ENCODE measurements at regions of chrX and their contacts with region 1.

Region 1: DNA sequence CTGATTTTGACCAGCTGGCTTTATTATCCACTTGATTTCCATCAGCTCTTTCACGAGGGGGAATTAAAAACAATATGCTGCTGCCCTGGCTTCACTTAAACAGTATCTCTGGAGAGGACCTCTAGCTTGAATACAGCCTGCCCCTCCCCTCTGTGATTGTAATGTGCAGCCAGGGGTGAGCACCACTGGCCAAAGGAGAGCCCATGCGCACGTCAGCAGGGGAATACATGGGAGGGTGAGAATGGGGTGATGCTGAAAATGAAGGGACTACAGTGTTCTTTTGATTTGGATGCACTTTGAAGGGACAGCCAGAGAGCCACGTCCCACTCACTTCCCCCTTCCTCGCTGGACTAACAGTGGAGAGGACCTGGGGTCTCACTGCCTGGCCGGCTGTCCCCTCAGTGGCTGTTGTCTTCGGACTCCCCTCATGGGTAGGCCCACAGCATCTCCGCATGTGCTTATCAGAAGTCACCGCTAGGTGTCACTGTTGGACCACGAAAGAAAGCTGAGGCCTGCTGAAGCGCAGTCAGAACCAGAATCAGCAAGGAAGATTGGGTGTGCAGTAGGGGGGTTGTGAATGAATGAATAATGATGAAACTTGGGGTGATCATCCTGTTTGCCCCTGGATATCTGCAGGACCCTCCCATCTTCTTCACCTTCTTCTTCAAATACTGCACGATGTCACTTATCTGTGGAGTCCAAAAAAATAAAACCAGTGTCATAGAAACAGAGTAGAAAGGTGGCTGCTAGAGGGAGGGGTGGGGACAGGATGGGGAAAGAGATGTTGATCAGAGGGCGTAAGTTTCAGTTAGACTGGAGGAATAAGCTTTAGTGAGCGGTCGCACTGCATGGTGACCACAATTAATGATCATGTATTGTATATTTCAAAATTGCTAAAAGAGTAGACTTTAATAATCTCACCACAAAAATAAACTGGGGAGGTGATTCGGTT is 32.8 kb downstream of the CLCN4 start:
- DNase-seq: peak; percentile 49
- ATAC-seq: peak; percentile 84
- H3K4me3 Mint-ChIP-seq: no peak overlapping the region
- H3K27ac Mint-ChIP-seq: peak overlapping the region; percentile 50
- H3K4me1 Mint-ChIP-seq: peaks cover 10% of the 10 kb centered on the region
- H3K27me3 Mint-ChIP-seq: no peaks in the 10 kb centered on the region
- CTCF ChIP-seq: no peak

Region 2: DNA sequence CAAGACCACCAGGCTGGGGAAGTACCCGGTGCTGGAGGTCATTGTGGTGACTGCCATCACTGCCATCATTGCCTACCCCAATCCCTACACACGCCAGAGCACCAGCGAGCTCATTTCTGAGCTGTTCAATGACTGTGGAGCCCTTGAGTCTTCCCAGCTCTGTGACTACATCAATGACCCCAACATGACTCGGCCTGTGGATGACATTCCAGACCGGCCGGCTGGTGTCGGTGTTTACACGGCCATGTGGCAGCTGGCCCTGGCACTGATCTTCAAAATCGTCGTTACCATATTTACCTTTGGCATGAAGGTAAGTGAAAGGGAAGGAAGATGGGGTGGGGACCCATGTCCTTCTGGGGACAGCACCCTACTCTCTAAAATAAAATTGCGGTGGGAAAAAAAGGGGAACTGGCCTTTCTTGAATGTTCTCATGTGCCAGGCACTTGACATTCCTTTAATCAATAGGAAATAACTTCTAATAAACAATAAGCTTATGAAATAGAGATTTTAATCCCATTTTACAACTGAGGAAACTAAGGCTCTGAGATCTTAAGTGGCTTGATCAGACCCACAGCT is 18.8 kb after region 1 on chrX:
- CTCF ChIA-PET with region 1: interaction called, 11 read pairs
- POLR2A ChIA-PET with region 1: no interaction called
- intact Hi-C with region 1: no loop called
- DNase-seq: no peak
- ATAC-seq: no peak
- H3K4me3 Mint-ChIP-seq: no peak overlapping the region
- H3K27ac Mint-ChIP-seq: peak overlapping the region; percentile 56
- H3K4me1 Mint-ChIP-seq: peaks cover 18% of the 10 kb centered on the region
- H3K27me3 Mint-ChIP-seq: no peaks in the 10 kb centered on the region
- CTCF ChIP-seq: no peak

Region 3: GRCh38 chrX:10326578-10326977 is 137.0 kb after region 1 on chrX:
- CTCF ChIA-PET with region 1: interaction called, 3 read pairs
- POLR2A ChIA-PET with region 1: no interaction called
- intact Hi-C with region 1: loop called (anchors 1 kb)
- DNase-seq: no peak
- ATAC-seq: no peak
- H3K4me3 Mint-ChIP-seq: no peak overlapping the region
- H3K27ac Mint-ChIP-seq: no peak overlapping the region
- H3K4me1 Mint-ChIP-seq: no peaks in the 10 kb centered on the region
- H3K27me3 Mint-ChIP-seq: peaks cover 4% of the 10 kb centered on the region
- CTCF ChIP-seq: no peak

Region 4: DNA sequence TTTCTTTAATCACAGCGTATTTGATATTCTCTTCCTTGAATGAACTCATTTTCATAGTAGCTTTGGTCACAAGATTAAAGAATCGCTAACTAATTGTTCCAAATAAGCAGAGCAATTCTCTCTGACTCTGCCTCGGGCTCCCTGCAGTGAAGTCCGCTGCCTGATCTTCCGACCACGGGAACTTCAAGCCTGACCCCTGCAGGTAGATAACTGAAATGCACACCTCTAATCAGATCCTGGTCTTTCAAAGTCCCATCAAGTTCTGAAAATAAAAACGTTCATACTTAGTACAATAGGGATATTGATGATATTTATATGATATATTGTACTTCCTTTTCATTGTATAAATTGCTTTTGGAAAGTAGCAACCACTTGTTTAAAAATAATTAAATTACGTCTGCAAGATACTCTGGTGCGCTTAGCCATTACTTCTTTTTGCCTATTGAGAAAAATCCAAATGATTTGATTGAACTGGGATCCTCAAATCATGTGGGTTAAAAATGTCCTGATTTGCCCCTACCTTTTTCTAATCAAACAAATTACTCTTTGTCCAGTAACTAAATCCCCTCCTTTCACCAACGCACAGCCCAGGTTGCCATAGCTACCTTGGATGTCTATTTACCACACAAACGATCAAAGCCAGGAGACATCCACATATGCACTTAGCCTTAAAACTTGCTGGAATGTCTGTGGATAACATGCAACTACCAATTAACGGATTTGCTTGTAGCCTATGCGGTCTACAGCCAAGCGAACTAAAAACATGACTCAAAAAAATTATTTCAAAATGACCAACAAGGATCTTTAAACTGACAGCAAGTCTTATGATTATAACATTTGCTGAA is 426.6 kb after region 1 on chrX:
- CTCF ChIA-PET with region 1: interaction called, 63 read pairs
- POLR2A ChIA-PET with region 1: interaction called, 3 read pairs
- intact Hi-C with region 1: loop called (anchors 1 kb)
- DNase-seq: no peak
- ATAC-seq: peak; percentile 57
- H3K4me3 Mint-ChIP-seq: no peak overlapping the region
- H3K27ac Mint-ChIP-seq: no peak overlapping the region
- H3K4me1 Mint-ChIP-seq: peaks cover 15% of the 10 kb centered on the region
- H3K27me3 Mint-ChIP-seq: peaks cover 18% of the 10 kb centered on the region
- CTCF ChIP-seq: no peak

Region 5: GRCh38 chrX:10769195-10769594 is 579.6 kb after region 1 on chrX:
- CTCF ChIA-PET with region 1: interaction called, 12 read pairs
- POLR2A ChIA-PET with region 1: no interaction called
- intact Hi-C with region 1: loop called (anchors 1 kb)
- DNase-seq: no peak
- ATAC-seq: no peak
- H3K4me3 Mint-ChIP-seq: no peak overlapping the region
- H3K27ac Mint-ChIP-seq: no peak overlapping the region
- H3K4me1 Mint-ChIP-seq: no peaks in the 10 kb centered on the region
- H3K27me3 Mint-ChIP-seq: no peaks in the 10 kb centered on the region
- CTCF ChIP-seq: no peak

Measured in activated B cell treated with CpG ODN at 0.5 μM for 24 hours (primary cell).